ENCODE measurements at regions of chr1 and their contacts with region 1.

Region 1: DNA sequence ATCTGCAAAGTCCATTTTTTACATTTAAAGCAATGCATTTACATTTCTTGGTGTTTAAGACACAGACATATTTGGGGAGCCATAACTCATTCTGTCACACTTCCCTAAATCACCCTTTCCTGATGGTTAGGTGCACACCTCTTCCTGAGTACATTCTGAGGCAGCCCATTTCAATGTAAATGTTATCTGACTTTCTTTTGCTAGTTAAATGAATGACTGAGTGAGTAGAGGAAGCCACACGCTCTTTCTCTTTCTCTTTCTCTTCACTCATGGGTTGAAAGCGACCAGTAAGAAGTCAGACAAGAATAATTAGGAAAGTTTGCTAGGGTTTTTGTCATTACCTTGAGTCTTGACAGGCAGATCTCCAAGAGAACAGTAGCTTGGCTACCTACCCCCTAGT is 143.1 kb downstream of the S1PR1 start:
- DNase-seq: no peak
- H3K4me3 ChIP-seq: no peak overlapping the region
- H3K27ac ChIP-seq: no peak overlapping the region
- H3K4me1 ChIP-seq: no peaks in the 10 kb centered on the region
- H3K27me3 ChIP-seq: no peaks in the 10 kb centered on the region
- CTCF ChIP-seq: no peak
- POLR2A ChIP-seq: no peak

Region 2: GRCh38 chr1:101346419-101346818 is 33.5 kb before region 1 on chr1:
- CTCF ChIA-PET with region 1: no interaction called
- POLR2A ChIA-PET with region 1: no interaction called
- dilution Hi-C with region 1: no loop called
- intact Hi-C with region 1: no loop called
- DNase-seq: no peak
- H3K4me3 ChIP-seq: no peak overlapping the region
- H3K27ac ChIP-seq: no peak overlapping the region
- H3K4me1 ChIP-seq: no peaks in the 10 kb centered on the region
- H3K27me3 ChIP-seq: peaks cover 0 to 1% of the 10 kb centered on the region in 2 experiments
- CTCF ChIP-seq: no peak
- POLR2A ChIP-seq: no peak

Region 3: DNA sequence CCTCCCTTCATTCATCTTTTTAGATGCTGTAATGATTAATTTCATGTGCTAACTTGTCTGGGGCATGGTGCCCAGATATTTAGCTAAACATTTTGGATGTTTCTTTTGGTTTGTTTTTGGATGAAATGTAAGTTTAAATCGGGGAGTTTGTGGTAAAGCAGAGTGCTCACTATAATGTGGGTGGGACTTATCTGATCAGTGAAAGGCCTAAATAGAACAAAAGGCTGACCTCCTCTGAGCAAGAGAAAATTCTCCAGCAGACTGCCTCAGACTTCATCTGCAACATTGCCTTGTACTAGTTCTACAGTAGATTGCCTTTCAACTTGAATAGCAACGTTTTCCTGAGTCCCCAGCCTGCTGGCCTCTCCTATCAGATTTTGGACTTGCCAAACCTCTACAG is 40.5 kb after region 1 on chr1:
- CTCF ChIA-PET with region 1: no interaction called
- POLR2A ChIA-PET with region 1: no interaction called
- dilution Hi-C with region 1: no loop called
- intact Hi-C with region 1: loop called (anchors 5 kb)
- DNase-seq: no peak
- H3K4me3 ChIP-seq: no peak overlapping the region
- H3K27ac ChIP-seq: no peak overlapping the region
- H3K4me1 ChIP-seq: no peaks in the 10 kb centered on the region
- H3K27me3 ChIP-seq: no peaks in the 10 kb centered on the region
- CTCF ChIP-seq: no peak
- POLR2A ChIP-seq: no peak

Region 4: GRCh38 chr1:101438359-101438758 is 58.4 kb after region 1 on chr1:
- CTCF ChIA-PET with region 1: interaction called, 4 read pairs
- POLR2A ChIA-PET with region 1: no interaction called
- dilution Hi-C with region 1: no loop called
- intact Hi-C with region 1: loop called (anchors 5 kb)
- DNase-seq: peak; percentile 59
- H3K4me3 ChIP-seq: no peak overlapping the region
- H3K27ac ChIP-seq: no peak overlapping the region
- H3K4me1 ChIP-seq: no peaks in the 10 kb centered on the region
- H3K27me3 ChIP-seq: peaks cover 6 to 8% of the 10 kb centered on the region in 2 experiments
- CTCF ChIP-seq: peak; percentile 44 to 55
- POLR2A ChIP-seq: no peak

Measured in endothelial cell of umbilical vein (primary cell).